Activated T-helper 2 cell treated with anti-CD3 and anti-CD28 coated beads, Interferon-gamma antibody, Interleukin-2, Interleukin-4, amounts not matched to agents 10 μg/mL and 5 μg/mL and 100 μg/mL, durations not matched to agents 14 hours and 24 hours and 36 hours (primary cell): ENCODE measurements at regions of chr2 and their contacts with region 1.

Region 1: DNA sequence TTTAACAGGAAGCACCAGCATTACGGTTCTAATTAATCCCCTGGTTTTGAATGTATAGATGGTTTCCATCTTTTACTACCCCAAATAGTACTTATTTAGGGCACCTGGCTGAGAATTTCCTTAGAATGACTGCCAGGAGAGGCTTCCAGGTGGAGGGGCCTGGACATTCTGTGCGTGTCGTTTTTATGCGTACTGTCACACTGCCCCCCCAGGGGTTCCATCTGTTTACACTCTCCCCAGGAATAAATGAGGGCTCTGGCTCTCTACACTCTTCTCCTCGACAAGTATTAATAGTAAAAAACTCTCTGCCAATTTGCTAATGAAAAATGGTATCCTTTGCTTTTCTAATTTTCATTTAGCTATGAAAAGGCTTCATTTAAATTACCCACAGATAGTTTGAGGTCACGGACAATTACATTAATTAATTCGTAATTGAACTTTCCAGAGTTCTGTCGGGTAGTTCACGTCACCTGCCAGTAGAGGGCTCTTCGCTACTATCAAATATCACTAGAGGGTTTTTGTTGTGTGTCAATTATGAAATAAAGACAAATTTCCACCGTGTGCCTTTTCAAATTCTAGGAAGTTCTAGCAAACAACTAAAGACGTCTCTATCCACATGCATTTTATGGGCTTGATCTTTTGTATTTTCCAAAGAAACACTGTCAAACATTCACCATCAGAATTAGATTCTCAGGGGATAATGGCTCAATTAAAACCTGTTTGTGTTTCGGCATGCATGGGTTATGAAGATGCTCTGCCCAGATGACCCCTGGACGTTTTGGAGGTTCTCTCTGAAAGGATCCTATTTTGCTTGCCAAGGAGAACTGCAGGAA is 88.8 kb upstream of the ASB18 start:
- DNase-seq: no peak
- H3K4me3 Mint-ChIP-seq: no peak overlapping the region
- H3K27ac Mint-ChIP-seq: no peak overlapping the region
- H3K4me1 Mint-ChIP-seq: peaks cover 4% of the 10 kb centered on the region
- H3K27me3 Mint-ChIP-seq: no peaks in the 10 kb centered on the region

Region 2: DNA sequence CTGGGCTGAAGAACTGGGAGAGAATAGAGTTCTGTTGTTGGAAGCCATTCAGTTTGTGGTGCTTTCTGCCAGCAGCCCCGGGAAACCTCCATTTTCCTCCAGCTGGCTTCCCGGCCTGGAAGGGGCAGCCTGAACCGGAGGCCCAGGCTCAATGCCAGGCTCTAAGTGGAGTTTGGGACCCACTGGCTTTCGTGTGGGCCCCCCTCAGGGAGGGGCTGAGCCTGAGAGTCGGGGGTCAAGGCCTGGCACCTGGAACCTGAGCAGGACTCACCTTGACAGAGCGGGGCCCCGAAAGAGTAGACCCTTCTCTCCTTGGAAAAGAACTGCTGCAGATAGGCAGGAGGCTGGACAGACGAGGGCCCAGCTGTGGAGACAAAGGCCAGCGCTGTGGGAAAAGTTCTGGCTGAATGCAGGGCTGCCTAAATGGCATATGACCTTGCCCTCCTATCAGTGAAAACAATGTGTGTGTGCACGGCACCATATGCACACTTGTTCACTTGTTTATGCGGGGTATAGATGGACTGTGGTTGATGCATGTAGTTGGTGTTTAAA is 54.0 kb before region 1 on chr2:
- intact Hi-C with region 1: no loop called
- DNase-seq: no peak
- H3K4me3 Mint-ChIP-seq: no peak overlapping the region
- H3K27ac Mint-ChIP-seq: no peak overlapping the region
- H3K4me1 Mint-ChIP-seq: no peaks in the 10 kb centered on the region
- H3K27me3 Mint-ChIP-seq: no peaks in the 10 kb centered on the region

Region 3: GRCh38 chr2:236512902-236513435 is 160.0 kb after region 1 on chr2:
- intact Hi-C with region 1: loop called (anchors 5 kb)
- DNase-seq: peak; percentile 57
- H3K4me3 Mint-ChIP-seq: no peak overlapping the region
- H3K27ac Mint-ChIP-seq: no peak overlapping the region
- H3K4me1 Mint-ChIP-seq: no peaks in the 10 kb centered on the region
- H3K27me3 Mint-ChIP-seq: peaks cover 23% of the 10 kb centered on the region

Region 4: GRCh38 chr2:236569573-236569973 is 216.6 kb after region 1 on chr2 and contains the start of gene ACKR3:
- intact Hi-C with region 1: loop called (anchors 1 kb)
- DNase-seq: peak; percentile 65
- H3K4me3 Mint-ChIP-seq: peak within 1 kb of the TSS; percentile 30
- H3K27ac Mint-ChIP-seq: peak within 1 kb of the TSS; percentile 29
- H3K4me1 Mint-ChIP-seq: peaks cover 19% of the 10 kb centered on the region
- H3K27me3 Mint-ChIP-seq: peaks cover 12% of the 10 kb centered on the region
- total RNA-seq, gene ACKR3: 1.8 and 2.7 TPM in 2 replicates

Region 5: DNA sequence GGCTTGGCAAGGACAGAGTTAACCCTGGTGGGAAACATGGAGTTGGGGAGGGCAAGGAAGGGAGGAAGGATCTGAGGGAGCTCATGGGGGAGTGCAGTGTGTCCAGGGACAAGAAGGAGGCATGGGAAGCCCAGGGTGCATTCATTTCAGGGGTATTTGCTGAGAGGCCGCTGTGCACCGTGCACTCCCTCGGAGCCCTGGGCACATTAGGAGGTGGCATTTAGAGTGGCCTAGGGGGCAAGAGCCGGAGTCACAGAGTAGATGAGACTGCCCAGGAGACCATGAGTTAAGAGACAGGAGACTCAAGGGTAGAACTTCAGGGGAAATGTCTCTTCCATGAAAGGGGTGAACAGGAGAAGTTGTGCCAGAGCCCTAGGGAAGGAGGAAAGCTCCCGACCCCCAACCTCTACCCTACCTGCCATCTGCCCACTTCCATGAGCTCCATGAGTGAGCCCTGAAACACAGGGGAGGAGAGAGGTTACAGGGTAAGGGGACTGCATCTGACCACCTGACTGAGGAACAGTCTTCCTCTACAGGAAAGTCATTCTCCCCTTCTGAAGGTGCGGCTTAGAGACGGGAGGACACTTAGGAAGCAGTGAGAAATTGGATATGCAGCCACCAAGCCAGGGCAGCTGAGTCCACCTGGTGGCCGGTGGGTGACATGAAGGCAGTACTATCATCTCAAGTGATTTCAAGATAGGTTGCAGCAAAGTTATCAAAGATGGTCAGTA is 674.2 kb after region 1 on chr2:
- intact Hi-C with region 1: loop called (anchors 2 kb)
- DNase-seq: no peak
- H3K4me3 Mint-ChIP-seq: no peak overlapping the region
- H3K27ac Mint-ChIP-seq: no peak overlapping the region
- H3K4me1 Mint-ChIP-seq: no peaks in the 10 kb centered on the region
- H3K27me3 Mint-ChIP-seq: no peaks in the 10 kb centered on the region

Region 6: DNA sequence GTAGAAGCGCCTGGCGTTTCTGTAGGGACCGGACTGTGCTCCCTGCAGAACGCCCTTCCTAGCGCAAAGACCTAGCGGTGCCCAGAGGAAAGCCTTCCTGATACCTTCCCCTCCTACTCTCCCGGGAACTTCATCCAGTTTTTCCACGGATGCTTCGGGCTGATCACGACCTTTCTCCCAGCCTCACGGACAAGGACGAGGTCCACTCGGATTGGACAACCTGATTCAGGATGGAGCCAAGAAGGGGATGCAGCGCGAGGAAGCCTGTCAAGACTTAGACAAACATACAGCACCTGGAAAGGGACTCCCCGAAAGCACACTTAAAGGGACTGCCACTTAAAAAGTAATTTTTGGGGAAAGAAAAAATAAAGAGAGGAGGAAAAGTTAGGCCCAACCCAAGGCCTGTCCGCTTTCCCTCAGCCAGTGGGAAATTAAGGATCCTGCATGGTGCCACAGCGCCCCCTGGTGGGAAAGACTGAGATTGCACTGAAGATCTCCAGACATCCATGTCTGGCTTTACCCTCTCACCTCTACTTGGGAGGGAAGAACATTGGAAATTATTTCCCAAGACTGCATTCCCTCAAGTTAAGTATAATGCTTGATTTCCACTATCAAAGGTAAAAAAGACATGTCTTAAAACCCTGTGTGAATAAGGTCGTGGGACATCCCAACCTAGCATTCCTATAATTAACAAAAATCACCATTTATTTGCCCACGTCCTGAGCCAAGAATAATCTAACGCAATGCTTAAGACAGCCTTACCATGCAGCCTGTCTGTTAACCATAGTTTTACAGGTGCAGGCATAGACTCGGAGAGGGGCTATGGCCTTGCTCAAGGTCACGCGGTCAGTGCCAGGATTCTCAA is 719.3 kb after region 1 on chr2:
- intact Hi-C with region 1: loop called (anchors 1 kb)
- DNase-seq: peak; percentile 41
- H3K4me3 Mint-ChIP-seq: no peak overlapping the region
- H3K27ac Mint-ChIP-seq: no peak overlapping the region
- H3K4me1 Mint-ChIP-seq: no peaks in the 10 kb centered on the region
- H3K27me3 Mint-ChIP-seq: no peaks in the 10 kb centered on the region